ENCODE measurements at regions of chr12 and their contacts with region 1.

Region 1: GRCh38 chr12:93378373-93379325 is 924 bp downstream of the NUDT4 start:
- DNase-seq: no peak
- ATAC-seq: no peak

Region 2: GRCh38 chr12:93302331-93303229 is 76.1 kb before region 1 on chr12:
- intact Hi-C with region 1: loop called (anchors 5 kb)
- DNase-seq: no peak
- ATAC-seq: peak; percentile 73

Measured in Right ventricle myocardium superior (tissue), 1 donor.